ENCODE measurements at regions of chr13 and their contacts with region 1.

Region 1: DNA sequence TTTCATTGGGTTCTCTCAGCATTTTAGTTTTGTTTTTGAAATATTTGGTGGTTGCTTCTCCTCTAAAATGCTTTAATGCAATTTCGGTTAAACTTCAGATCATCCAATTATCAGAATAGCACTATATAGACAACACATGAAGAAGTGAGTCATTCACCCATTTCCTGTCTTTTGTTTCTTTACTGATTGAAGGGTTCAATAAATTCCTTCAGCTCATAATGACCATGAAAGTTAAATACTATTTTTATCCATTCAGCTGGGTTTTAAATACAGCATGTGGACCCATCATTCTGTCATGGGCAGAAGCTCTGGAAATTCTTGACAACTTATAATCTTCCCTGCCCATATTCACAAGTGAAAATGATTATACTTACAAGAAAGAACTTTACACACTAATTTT is 187.2 kb downstream of the ITGBL1 start:
- DNase-seq: no peak
- ATAC-seq: no peak
- H3K4me3 ChIP-seq: no peak overlapping the region
- H3K4me3 Mint-ChIP-seq: no peak overlapping the region
- H3K27ac ChIP-seq: no peak overlapping the region
- H3K27ac Mint-ChIP-seq: no peak overlapping the region
- H3K4me1 ChIP-seq: no peaks in the 10 kb centered on the region
- H3K4me1 Mint-ChIP-seq: peaks cover 0 to 4% (median 0%) of the 10 kb centered on the region in 7 donors
- H3K27me3 ChIP-seq: no peaks in the 10 kb centered on the region
- H3K27me3 Mint-ChIP-seq: peaks cover 0 to 7% (median under 1%) of the 10 kb centered on the region in 5 donors

Region 2: DNA sequence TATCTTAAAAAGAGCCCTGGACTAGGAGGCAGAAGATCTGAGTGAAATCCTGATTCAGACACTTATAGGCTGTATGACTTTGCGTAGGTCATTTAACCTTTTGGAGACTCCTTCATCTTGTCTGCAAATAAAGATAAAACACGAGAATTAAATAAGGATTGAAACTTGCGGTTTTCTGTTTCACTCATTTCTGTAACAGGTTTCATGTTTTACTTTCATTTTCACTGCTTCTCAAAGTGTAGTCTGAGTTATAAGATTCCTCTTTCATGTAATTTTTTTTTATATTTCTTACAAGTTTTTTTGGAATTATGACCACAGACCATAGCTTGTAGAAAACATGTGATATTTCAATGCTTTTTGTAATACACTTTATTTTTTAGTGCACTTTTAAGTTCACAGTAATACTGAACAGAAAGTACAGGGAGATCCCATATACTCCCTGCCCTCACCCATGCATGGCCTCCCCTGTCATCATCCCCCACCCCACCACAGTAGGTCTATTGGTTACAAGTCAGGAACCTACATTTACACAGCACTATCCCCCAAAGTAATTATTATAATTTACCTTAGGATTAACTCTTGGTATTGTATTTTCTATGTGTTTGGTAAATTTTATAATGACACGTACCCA is 12.7 kb before region 1 on chr13:
- CTCF ChIA-PET with region 1: interaction called, 3 read pairs
- POLR2A ChIA-PET with region 1: interaction called, 3 read pairs
- intact Hi-C with region 1: loop called in 1 of 2 experiments (anchors 2 kb)
- DNase-seq: peak in 6 of 9 donors; percentile 24 to 62 (median 48)
- ATAC-seq: peak; percentile 73
- H3K4me3 ChIP-seq: peak overlapping the region; percentile 40
- H3K4me3 Mint-ChIP-seq: peak overlapping the region; percentile 63 to 92 (median 78)
- H3K27ac ChIP-seq: peak overlapping the region; percentile 67
- H3K27ac Mint-ChIP-seq: peak overlapping the region; percentile 15 to 89 (median 76)
- H3K4me1 ChIP-seq: peaks cover 29 to 33% of the 10 kb centered on the region in 2 donors
- H3K4me1 Mint-ChIP-seq: peaks cover 9 to 49% (median 48%) of the 10 kb centered on the region in 7 donors
- H3K27me3 ChIP-seq: no peaks in the 10 kb centered on the region
- H3K27me3 Mint-ChIP-seq: peaks cover 0 to 27% (median 0%) of the 10 kb centered on the region in 5 donors